Head of caudate nucleus (tissue), 42 donors: ENCODE measurements at regions of chr19 and their contacts with region 1.

Region 1: DNA sequence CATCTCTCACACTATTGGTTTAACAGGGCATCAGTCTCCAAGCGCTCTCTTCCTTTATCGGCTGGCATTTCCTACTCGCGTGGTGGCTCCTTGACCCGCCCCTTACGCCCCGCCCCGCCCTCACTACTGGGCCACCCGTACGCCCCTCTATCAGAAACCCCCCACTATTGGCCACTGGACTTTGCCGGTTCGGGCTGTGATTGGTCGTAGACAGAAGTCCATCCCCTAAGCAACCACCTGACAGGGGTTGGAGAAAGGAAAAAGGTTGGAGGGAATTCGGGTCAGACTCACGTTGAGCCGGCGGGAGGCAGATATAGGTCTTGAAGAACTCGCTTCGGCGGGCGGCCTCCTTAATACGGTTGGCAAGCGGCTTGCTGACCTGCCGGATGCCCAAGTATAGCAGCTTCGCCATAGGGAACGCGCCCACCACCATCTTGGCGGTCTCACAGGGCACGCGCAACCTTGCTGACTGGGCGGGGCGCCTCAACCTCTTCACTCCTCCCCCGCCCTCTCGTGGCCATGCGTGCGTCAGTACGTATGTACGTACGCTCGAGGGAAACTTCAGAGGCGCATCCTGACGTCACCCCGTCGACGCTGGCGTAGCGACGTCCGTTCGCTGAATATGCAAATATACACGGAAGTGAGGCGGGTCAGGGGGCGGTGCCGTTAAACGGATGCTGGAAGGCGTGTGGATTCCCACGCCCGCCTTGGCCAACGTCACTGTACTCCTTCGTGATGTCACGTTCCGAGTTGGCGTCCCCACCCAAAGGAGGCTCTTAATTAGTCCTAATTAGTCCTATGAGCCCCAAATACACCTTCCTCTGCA is at the start of gene OPA3:
- DNase-seq: peak; percentile 99 to 100 (median 100)

Region 2: DNA sequence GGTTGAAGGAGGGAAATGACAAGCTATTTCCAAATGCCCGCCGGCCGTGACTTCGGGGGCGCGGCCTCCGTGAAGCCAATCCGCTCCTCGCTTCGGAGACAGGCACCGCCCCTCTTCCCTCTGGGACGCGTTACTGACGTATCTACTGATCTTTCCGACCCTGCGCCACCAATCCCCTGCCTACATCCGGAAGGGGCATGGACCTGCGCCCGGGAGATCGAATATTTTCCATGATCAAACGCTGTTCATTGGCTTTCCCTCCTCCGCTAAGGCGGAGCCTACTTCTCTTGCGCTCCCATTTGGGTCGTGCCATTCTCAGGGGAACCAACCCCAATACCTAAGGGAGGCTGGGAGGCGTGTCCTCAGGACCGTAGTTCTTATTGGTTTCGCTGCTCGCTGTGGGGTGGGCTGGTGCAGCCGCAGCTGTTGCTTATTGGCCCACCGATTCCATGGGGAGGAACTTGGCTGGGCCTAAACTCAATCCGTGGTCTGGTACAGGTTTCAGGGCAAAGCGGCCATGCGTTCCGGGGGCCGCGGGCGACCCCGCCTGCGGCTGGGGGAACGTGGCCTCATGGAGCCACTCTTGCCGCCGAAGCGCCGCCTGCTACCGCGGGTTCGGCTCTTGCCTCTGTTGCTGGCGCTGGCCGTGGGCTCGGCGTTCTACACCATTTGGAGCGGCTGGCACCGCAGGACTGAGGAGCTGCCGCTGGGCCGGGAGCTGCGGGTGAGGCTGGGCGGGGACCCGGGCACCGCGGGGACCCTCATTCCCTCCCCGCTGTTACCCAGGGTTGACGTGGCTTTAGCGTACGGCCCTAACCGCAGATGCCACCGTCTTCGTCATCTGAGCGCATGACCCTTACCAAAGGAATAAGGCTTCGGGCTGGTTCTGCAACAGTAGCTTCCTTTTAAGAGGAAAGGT is 107.9 kb after region 1 on chr19 and contains the start of gene QPCTL:
- intact Hi-C with region 1: loop called (anchors 5 kb)
- DNase-seq: peak; percentile 90 to 100 (median 98)